Right ventricle myocardium inferior (tissue), 1 donor: ENCODE measurements at regions of chr12 and their contacts with region 1.

Region 1: GRCh38 chr12:89461649-89462612 is 62.7 kb downstream of the GALNT4 start:
- DNase-seq: no peak
- ATAC-seq: peak; percentile 92

Region 2: DNA sequence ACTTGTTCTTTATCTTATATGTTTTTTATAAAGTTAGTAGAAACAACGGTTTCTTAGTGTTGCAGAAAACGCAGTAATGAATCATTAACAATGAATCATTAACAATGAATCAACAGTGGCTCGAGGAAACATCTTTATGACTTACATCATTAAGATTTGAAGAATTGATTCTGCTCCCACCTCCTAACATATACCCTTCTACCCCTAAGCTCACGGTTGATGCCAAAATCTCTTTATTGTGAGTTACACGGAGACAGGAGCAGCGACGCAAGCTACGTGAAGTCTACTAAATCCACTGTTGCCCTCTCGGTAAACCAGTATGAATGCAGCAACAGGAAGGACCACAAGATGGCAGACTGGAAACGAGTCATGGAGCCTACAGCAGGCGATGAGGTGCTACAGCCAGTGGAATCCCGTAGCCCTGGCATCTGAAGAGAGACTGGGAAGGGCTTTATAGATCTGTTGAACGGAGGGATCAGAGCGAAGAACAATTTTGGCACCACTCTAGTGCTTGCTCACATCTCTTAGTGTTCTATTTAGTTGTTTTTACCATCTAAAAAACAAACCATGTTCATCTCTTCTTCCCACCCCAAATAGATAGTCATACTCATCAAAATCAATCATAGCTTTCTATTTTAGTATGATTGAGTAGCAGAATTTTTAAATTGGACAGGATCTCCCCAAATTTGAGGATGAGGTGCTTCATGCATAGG is 442.4 kb before region 1 on chr12:
- intact Hi-C with region 1: loop called (anchors 1 kb)
- DNase-seq: peak; percentile 67
- ATAC-seq: peak; percentile 91

Region 3: DNA sequence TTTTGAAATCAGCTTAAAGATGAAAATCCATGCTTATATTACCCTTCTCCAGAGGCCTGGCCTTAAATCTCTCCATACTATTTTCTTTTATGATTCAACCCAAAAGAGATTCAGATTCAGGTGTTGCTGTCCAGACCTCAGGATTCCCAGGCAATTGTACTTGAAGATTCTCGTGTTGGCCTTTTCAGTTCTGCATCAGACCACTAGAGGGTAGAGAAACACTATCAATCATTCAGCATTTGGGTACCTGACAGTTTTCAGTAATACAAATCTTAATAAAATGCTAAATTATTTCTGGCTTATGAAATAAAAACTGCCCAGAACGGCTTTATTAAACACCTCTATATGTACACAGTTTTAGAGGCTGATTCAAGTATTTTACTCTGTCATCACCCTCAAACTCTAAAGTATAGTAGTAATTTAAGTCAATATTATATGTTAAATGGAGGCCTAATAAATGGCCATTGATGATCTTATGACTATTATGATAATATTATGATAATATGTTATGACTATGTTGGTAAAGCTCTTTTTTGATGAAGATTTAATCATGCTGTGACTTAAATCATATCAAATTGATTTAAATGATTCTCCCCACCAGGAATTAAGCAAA is 410.8 kb before region 1 on chr12:
- intact Hi-C with region 1: loop called (anchors 1 kb)
- DNase-seq: no peak
- ATAC-seq: peak; percentile 59

Region 4: DNA sequence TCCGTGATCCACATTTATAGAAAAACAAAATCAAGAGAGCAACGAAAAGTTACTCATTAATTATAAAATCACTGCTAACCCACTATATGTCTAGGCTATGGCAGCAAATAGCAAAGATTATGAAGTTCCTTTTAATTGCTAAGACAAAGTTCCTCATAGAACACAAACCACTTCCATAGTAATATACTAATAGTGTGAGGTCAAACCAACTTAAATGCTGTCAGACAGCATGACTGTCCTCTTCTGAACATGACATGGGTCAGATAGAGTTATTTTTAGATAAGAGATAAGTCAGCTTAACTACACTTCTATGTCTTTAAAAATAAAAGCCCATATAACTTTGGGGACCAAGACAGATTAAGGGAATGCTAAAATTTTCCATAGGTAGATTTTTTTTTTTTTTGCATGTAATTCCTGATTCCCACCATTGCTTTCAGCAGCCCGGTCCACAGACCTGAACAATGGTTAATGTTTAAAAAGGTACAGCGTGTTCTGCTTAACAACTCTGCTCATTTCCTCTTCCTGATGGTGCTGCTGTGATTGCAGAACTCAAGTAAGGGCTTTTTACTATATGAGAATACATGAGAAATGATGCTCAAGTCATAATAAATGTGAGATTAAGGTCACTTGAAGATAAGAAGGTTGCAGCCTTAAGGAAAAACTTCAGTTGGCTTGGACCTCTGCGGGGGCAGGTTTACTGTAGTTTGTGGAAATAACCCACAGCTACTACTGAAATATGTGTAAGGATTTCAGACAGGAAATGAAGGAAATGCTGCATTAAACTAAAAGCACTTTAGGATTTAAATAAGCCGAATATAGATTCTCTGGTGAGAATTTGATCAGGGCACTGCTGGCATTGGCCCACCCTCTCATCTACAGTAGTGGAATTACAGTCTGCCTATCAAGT is 71.9 kb before region 1 on chr12:
- intact Hi-C with region 1: no loop called
- DNase-seq: no peak
- ATAC-seq: peak; percentile 76

Region 5: GRCh38 chr12:89552376-89552775 is 90.4 kb after region 1 on chr12:
- intact Hi-C with region 1: no loop called
- DNase-seq: no peak
- ATAC-seq: no peak